ENCODE measurements at regions of chr14 and their contacts with region 1.

Region 1: GRCh38 chr14:24710403-24711112 is 76.6 kb upstream of the GZMB start:
- DNase-seq: peak in 1 of 2 donors; percentile 31
- ATAC-seq: no peak
- H3K4me3 ChIP-seq: peak overlapping the region; percentile 26
- H3K27ac ChIP-seq: no peak overlapping the region
- H3K4me1 ChIP-seq: no peaks in the 10 kb centered on the region
- H3K27me3 ChIP-seq: no peaks in the 10 kb centered on the region
- CTCF ChIP-seq: peak; percentile 62

Region 2: GRCh38 chr14:24630872-24631477 is 79.6 kb before region 1 on chr14:
- intact Hi-C with region 1: no loop called
- DNase-seq: no peak
- ATAC-seq: no peak
- H3K4me3 ChIP-seq: no peak overlapping the region
- H3K27ac ChIP-seq: no peak overlapping the region
- H3K4me1 ChIP-seq: no peaks in the 10 kb centered on the region
- H3K27me3 ChIP-seq: no peaks in the 10 kb centered on the region
- CTCF ChIP-seq: no peak

Region 3: GRCh38 chr14:25150934-25151790 is 440.6 kb after region 1 on chr14:
- intact Hi-C with region 1: loop called in 1 of 2 experiments (anchors 5 kb)
- DNase-seq: no peak
- ATAC-seq: no peak
- H3K4me3 ChIP-seq: no peak overlapping the region
- H3K27ac ChIP-seq: no peak overlapping the region
- H3K4me1 ChIP-seq: no peaks in the 10 kb centered on the region
- H3K27me3 ChIP-seq: no peaks in the 10 kb centered on the region
- CTCF ChIP-seq: peak; percentile 63

Region 4: GRCh38 chr14:25400607-25401206 is 690.1 kb after region 1 on chr14:
- intact Hi-C with region 1: loop called in 1 of 2 experiments (anchors 10 kb)
- DNase-seq: no peak
- ATAC-seq: no peak
- H3K4me3 ChIP-seq: no peak overlapping the region
- H3K27ac ChIP-seq: no peak overlapping the region
- H3K4me1 ChIP-seq: no peaks in the 10 kb centered on the region
- H3K27me3 ChIP-seq: no peaks in the 10 kb centered on the region
- CTCF ChIP-seq: peak; percentile 42

Measured in psoas muscle (tissue), 8 donors.